Natural killer cell (primary cell): ENCODE measurements at regions of chr17 and their contacts with region 1.

Region 1: GRCh38 chr17:81101614-81102306 is 63.5 kb upstream of the PVALEF start:
- DNase-seq: peak; percentile 87 to 94
- ATAC-seq: peak; percentile 99 to 100 (median 99)
- H3K4me3 ChIP-seq: no peak overlapping the region
- H3K4me3 Mint-ChIP-seq: no peak overlapping the region
- H3K27ac ChIP-seq: no peak overlapping the region
- H3K27ac Mint-ChIP-seq: no peak overlapping the region
- H3K4me1 ChIP-seq: peaks cover 22% of the 10 kb centered on the region
- H3K4me1 Mint-ChIP-seq: peaks cover 0 to 8% of the 10 kb centered on the region in 2 donors
- H3K27me3 ChIP-seq: no peaks in the 10 kb centered on the region
- H3K27me3 Mint-ChIP-seq: no peaks in the 10 kb centered on the region
- CTCF ChIP-seq: peak; percentile 100

Region 2: DNA sequence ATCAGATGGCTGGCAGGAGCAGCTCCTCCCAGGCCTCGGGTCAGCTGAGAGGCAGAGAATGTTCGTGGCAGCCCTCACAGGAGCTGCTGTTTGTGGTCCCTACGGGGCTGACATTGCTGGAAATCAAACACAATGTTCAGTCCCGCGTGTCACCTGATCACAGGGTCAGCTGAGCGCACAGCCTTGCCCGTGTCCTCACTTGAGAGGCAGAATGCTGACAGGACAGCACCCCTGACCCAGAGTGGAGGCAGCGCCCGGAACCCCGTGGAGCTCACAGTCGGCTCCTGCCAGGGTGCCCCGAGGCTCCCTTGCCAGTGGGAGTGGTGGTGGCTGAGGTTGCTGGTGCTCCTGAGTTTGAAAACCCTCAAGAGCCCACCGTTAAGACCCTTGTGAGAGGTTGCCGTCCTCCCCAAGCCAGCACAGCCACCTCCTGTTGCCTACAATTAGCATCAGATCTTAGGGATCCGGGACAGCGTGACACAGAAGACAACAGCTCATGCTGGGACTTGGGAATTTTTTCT is 113.8 kb before region 1 on chr17:
- intact Hi-C with region 1: loop called (anchors 2 kb)
- DNase-seq: no peak
- ATAC-seq: no peak
- H3K4me3 ChIP-seq: no peak overlapping the region
- H3K4me3 Mint-ChIP-seq: no peak overlapping the region
- H3K27ac ChIP-seq: no peak overlapping the region
- H3K27ac Mint-ChIP-seq: no peak overlapping the region
- H3K4me1 ChIP-seq: peaks cover 35% of the 10 kb centered on the region
- H3K4me1 Mint-ChIP-seq: peaks cover 4 to 11% of the 10 kb centered on the region in 2 donors
- H3K27me3 ChIP-seq: no peaks in the 10 kb centered on the region
- H3K27me3 Mint-ChIP-seq: peaks cover 0 to 5% of the 10 kb centered on the region in 2 donors
- CTCF ChIP-seq: no peak

Region 3: DNA sequence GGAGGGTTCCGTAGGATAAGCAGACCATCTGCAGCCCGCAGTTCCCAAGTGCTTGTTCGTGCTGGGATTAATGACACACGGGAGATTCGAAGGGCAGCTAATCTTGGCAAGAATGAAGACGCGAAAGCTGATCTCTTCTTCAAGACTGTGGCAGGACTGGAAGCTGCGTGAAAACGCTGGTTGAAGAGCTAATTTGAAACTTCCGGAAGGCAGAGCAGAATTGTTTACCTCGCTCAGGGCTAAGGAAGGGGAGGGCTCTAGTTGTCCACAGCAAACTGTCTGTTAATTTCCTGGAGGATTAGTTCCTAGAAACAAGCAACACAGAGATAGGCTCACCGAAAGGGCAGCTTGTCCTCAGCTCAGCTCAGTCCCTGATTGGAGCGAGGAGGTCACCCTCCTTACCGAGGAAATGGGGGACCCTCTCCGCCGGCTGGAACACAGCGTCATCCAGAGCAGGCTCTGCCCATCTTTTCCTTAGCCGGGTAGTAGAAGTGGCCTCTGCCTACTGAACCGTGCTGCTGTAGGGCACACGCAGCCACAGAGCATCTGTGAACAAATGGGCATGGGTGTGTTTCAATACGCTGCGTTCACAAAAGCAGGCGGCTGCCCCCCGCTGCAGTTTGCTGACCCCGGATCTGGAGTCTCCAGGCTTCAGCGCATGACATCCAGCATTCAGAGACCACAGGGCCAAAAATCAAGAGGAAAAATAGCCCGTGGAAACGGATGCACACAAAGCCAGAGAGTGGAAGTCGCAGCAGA is 83.5 kb before region 1 on chr17:
- intact Hi-C with region 1: loop called (anchors 1 kb)
- DNase-seq: peak in 1 of 2 donors; percentile 69
- ATAC-seq: peak; percentile 81 to 88 (median 83)
- H3K4me3 ChIP-seq: peak overlapping the region; percentile 41
- H3K4me3 Mint-ChIP-seq: peak overlapping the region; percentile 87
- H3K27ac ChIP-seq: peak overlapping the region; percentile 84
- H3K27ac Mint-ChIP-seq: peak overlapping the region; percentile 86 to 95
- H3K4me1 ChIP-seq: peaks cover 52% of the 10 kb centered on the region
- H3K4me1 Mint-ChIP-seq: peaks cover 20 to 27% of the 10 kb centered on the region in 2 donors
- H3K27me3 ChIP-seq: no peaks in the 10 kb centered on the region
- H3K27me3 Mint-ChIP-seq: no peaks in the 10 kb centered on the region
- CTCF ChIP-seq: no peak